ENCODE measurements at regions of chr1 and their contacts with region 1.

Region 1: GRCh38 chr1:200802865-200803512 is 64.3 kb downstream of the CAMSAP2 start:
- DNase-seq: peak; percentile 77
- H3K4me3 ChIP-seq: no peak overlapping the region
- H3K27ac ChIP-seq: no peak overlapping the region
- H3K4me1 ChIP-seq: no peaks in the 10 kb centered on the region
- CTCF ChIP-seq: peak; percentile 99

Region 2: DNA sequence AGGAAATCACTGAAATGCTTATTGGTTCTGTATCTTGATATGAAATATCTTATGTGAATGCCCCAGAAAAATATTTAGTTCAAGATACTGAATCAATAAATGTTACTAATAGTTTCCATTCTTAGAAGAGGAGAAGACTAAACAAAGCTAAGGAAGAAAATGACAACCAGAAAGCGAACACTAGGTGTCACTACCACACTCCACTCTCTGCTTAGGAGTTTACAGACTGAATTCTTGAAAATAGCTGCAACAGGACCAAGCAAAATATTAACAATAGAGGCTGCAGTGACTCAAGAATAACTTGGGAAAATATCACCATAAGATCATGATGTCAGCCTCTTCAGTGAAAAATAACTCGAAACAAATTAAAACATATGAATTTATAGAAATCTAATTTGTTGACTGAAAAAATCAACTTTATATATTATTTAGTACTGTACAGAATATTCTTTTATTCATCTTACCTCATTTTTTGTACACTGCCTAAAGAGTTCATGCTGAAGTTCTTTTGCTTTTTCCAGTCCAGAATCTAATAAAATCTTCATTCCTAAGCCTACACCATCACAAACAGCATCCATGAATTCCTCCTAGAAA is 244.0 kb before region 1 on chr1:
- CTCF ChIA-PET with region 1: no interaction called
- POLR2A ChIA-PET with region 1: no interaction called
- intact Hi-C with region 1: loop called (anchors 1 kb)
- DNase-seq: peak; percentile 44
- H3K4me3 ChIP-seq: no peak overlapping the region
- H3K27ac ChIP-seq: no peak overlapping the region
- H3K4me1 ChIP-seq: no peaks in the 10 kb centered on the region
- CTCF ChIP-seq: peak; percentile 92

Region 3: GRCh38 chr1:200738740-200739498 is 64.1 kb before region 1 on chr1 and contains the start of gene CAMSAP2:
- CTCF ChIA-PET with region 1: no interaction called
- POLR2A ChIA-PET with region 1: no interaction called
- intact Hi-C with region 1: loop called (anchors 2 kb)
- DNase-seq: peak; percentile 77
- H3K4me3 ChIP-seq: peak within 1 kb of the TSS; percentile 97
- H3K27ac ChIP-seq: peak within 1 kb of the TSS; percentile 55
- H3K4me1 ChIP-seq: peaks cover 23% of the 10 kb centered on the region
- CTCF ChIP-seq: no peak
- total RNA-seq, gene CAMSAP2: 9.2 and 10.0 TPM in 2 replicates

Measured in OCI-LY7 (cell line).